Activated B cell treated with CpG ODN at 0.5 μM for 24 hours (primary cell): ENCODE measurements at regions of chr9 and their contacts with region 1.

Region 1: GRCh38 chr9:37408933-37409710 is 13.4 kb upstream of the GRHPR start:
- DNase-seq: peak; percentile 85
- ATAC-seq: peak; percentile 80
- H3K4me3 Mint-ChIP-seq: peak overlapping the region; percentile 75
- H3K27ac Mint-ChIP-seq: peak overlapping the region; percentile 98
- H3K4me1 Mint-ChIP-seq: peaks cover 92% of the 10 kb centered on the region
- H3K27me3 Mint-ChIP-seq: no peaks in the 10 kb centered on the region
- CTCF ChIP-seq: no peak

Region 2: GRCh38 chr9:36765468-36766341 is 643.4 kb before region 1 on chr9:
- CTCF ChIA-PET with region 1: no interaction called
- POLR2A ChIA-PET with region 1: no interaction called
- intact Hi-C with region 1: loop called (anchors 10 kb)
- DNase-seq: peak; percentile 89
- ATAC-seq: peak; percentile 98
- H3K4me3 Mint-ChIP-seq: no peak overlapping the region
- H3K27ac Mint-ChIP-seq: no peak overlapping the region
- H3K4me1 Mint-ChIP-seq: no peaks in the 10 kb centered on the region
- H3K27me3 Mint-ChIP-seq: peaks cover 17% of the 10 kb centered on the region
- CTCF ChIP-seq: no peak

Region 3: GRCh38 chr9:37004424-37004935 is 404.6 kb before region 1 on chr9:
- CTCF ChIA-PET with region 1: no interaction called
- POLR2A ChIA-PET with region 1: interaction called, 4 read pairs
- intact Hi-C with region 1: loop called (anchors 1 kb)
- DNase-seq: no peak
- ATAC-seq: peak; percentile 37
- H3K4me3 Mint-ChIP-seq: peak overlapping the region; percentile 86
- H3K27ac Mint-ChIP-seq: peak overlapping the region; percentile 84
- H3K4me1 Mint-ChIP-seq: peaks cover 94% of the 10 kb centered on the region
- H3K27me3 Mint-ChIP-seq: no peaks in the 10 kb centered on the region
- CTCF ChIP-seq: no peak

Region 4: GRCh38 chr9:37197158-37198038 is 211.7 kb before region 1 on chr9:
- CTCF ChIA-PET with region 1: no interaction called
- POLR2A ChIA-PET with region 1: interaction called, 12 read pairs
- intact Hi-C with region 1: loop called (anchors 5 kb)
- DNase-seq: no peak
- ATAC-seq: peak; percentile 72
- H3K4me3 Mint-ChIP-seq: peak overlapping the region; percentile 64
- H3K27ac Mint-ChIP-seq: peak overlapping the region; percentile 91
- H3K4me1 Mint-ChIP-seq: peaks cover 96% of the 10 kb centered on the region
- H3K27me3 Mint-ChIP-seq: no peaks in the 10 kb centered on the region
- CTCF ChIP-seq: no peak

Region 5: GRCh38 chr9:37329576-37329975 is 79.5 kb before region 1 on chr9:
- CTCF ChIA-PET with region 1: interaction called, 13 read pairs
- POLR2A ChIA-PET with region 1: interaction called, 19 read pairs
- intact Hi-C with region 1: loop called (anchors 1 kb)
- DNase-seq: no peak
- ATAC-seq: peak; percentile 47
- H3K4me3 Mint-ChIP-seq: peak overlapping the region; percentile 33
- H3K27ac Mint-ChIP-seq: peak overlapping the region; percentile 83
- H3K4me1 Mint-ChIP-seq: peaks cover 71% of the 10 kb centered on the region
- H3K27me3 Mint-ChIP-seq: no peaks in the 10 kb centered on the region
- CTCF ChIP-seq: no peak

Region 6: GRCh38 chr9:37382161-37382981 is 26.8 kb before region 1 on chr9:
- CTCF ChIA-PET with region 1: interaction called, 103 read pairs
- POLR2A ChIA-PET with region 1: interaction called, 975 read pairs
- intact Hi-C with region 1: loop called (anchors 1 kb)
- DNase-seq: no peak
- ATAC-seq: peak; percentile 23
- H3K4me3 Mint-ChIP-seq: peak overlapping the region; percentile 53
- H3K27ac Mint-ChIP-seq: peak overlapping the region; percentile 97
- H3K4me1 Mint-ChIP-seq: peaks cover 94% of the 10 kb centered on the region
- H3K27me3 Mint-ChIP-seq: no peaks in the 10 kb centered on the region
- CTCF ChIP-seq: no peak

Region 7: DNA sequence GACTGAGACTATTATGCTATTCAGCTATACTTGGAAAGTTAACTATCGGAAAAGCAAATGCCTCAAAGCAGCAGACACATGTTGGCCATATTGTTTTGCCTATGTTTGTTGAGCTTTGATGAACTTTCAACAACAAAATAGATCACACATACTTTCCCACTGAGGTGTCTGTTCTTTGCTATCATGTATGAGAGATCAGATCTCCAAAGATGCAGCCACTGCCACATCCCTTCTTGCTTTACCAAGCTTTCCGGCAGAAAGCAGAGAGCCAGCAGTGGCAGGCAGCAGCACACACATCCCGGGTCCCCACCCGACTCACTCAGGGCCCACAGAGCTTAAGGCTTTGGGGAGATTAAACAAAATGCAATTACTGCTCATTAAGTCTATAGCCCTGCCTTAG is 37.3 kb after region 1 on chr9:
- CTCF ChIA-PET with region 1: no interaction called
- POLR2A ChIA-PET with region 1: no interaction called
- intact Hi-C with region 1: no loop called
- DNase-seq: no peak
- ATAC-seq: no peak
- H3K4me3 Mint-ChIP-seq: no peak overlapping the region
- H3K27ac Mint-ChIP-seq: no peak overlapping the region
- H3K4me1 Mint-ChIP-seq: peaks cover 10% of the 10 kb centered on the region
- H3K27me3 Mint-ChIP-seq: no peaks in the 10 kb centered on the region
- CTCF ChIP-seq: no peak

Region 8: GRCh38 chr9:37465249-37466036 is 56.3 kb after region 1 on chr9 and contains the start of gene ZBTB5:
- CTCF ChIA-PET with region 1: no interaction called
- POLR2A ChIA-PET with region 1: interaction called, 11 read pairs
- intact Hi-C with region 1: no loop called
- DNase-seq: peak; percentile 93
- ATAC-seq: peak; percentile 76
- H3K4me3 Mint-ChIP-seq: peak within 1 kb of the TSS; percentile 98
- H3K27ac Mint-ChIP-seq: peak within 1 kb of the TSS; percentile 98
- H3K4me1 Mint-ChIP-seq: peaks cover 36% of the 10 kb centered on the region
- H3K27me3 Mint-ChIP-seq: no peaks in the 10 kb centered on the region
- CTCF ChIP-seq: no peak
- total RNA-seq, gene ZBTB5: 26.5 and 28.1 TPM in 2 replicates

Region 9: GRCh38 chr9:37820142-37820541 is 411.0 kb after region 1 on chr9:
- CTCF ChIA-PET with region 1: no interaction called
- POLR2A ChIA-PET with region 1: no interaction called
- intact Hi-C with region 1: no loop called
- DNase-seq: no peak
- ATAC-seq: no peak
- H3K4me3 Mint-ChIP-seq: no peak overlapping the region
- H3K27ac Mint-ChIP-seq: no peak overlapping the region
- H3K4me1 Mint-ChIP-seq: no peaks in the 10 kb centered on the region
- H3K27me3 Mint-ChIP-seq: no peaks in the 10 kb centered on the region
- CTCF ChIP-seq: no peak

Region 10: GRCh38 chr9:38035873-38036272 is 626.8 kb after region 1 on chr9:
- CTCF ChIA-PET with region 1: no interaction called
- POLR2A ChIA-PET with region 1: no interaction called
- intact Hi-C with region 1: no loop called
- DNase-seq: no peak
- ATAC-seq: no peak
- H3K4me3 Mint-ChIP-seq: no peak overlapping the region
- H3K27ac Mint-ChIP-seq: no peak overlapping the region
- H3K4me1 Mint-ChIP-seq: peaks cover 6% of the 10 kb centered on the region
- H3K27me3 Mint-ChIP-seq: peaks cover 9% of the 10 kb centered on the region
- CTCF ChIP-seq: no peak